ENCODE measurements at regions of chr17 and their contacts with region 1.

Region 1: GRCh38 chr17:68613739-68614298 is 12.7 kb upstream of the FAM20A start:
- DNase-seq: peak; percentile 25
- H3K4me3 ChIP-seq: no peak overlapping the region
- H3K27ac ChIP-seq: no peak overlapping the region
- H3K4me1 ChIP-seq: no peaks in the 10 kb centered on the region
- H3K27me3 ChIP-seq: no peaks in the 10 kb centered on the region
- CTCF ChIP-seq: peak; percentile 73 to 86

Region 2: DNA sequence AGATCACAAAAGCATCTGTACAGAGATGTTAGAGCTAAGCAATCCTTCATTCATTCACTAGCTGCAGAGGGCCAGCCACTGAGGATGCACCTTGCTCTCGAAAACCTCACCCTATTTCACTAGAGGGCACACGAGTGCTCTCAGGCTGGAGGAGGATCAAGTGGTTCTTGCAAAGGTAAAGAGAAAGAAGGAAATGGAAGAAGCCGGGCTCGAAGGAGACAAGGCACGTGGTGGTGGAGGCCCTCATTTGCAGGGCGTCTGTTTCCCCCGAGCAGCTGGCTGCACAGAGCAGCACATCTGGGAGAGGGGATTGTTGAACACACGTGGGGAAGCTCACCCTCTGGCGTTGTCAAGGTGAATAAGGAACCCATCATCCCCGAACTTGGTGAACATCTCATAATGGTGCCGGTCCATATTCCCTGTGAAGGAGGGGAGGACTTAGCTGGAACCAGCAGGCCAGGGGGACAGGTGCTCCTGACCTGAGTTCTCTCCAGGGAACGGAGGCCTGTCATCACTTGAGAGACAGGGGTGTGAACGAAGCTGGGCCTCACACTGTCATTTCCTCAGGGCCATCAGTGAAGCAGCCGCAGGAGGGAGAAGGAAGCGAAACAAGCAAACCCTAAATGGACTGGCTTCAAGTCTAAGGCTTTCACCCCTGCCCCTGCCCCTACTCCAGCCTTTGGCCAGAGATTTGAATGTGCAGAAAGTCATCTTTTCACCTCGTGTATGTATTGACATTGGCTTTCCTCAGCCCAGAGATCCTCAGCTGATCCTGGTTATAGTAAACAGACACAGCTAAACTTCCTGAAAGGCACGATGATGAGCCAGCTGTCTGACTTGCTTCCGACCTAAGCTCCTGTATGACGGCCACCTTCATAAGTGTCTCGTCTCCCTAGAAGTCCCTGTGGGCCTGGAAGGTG is 74.0 kb before region 1 on chr17:
- CTCF ChIA-PET with region 1: no interaction called
- dilution Hi-C with region 1: no loop called
- in situ Hi-C with region 1: loop called (anchors 10 kb)
- intact Hi-C with region 1: loop called (anchors 1 kb)
- DNase-seq: peak; percentile 19
- H3K4me3 ChIP-seq: no peak overlapping the region
- H3K27ac ChIP-seq: no peak overlapping the region
- H3K4me1 ChIP-seq: no peaks in the 10 kb centered on the region
- H3K27me3 ChIP-seq: no peaks in the 10 kb centered on the region
- CTCF ChIP-seq: peak; percentile 9 to 63

Region 3: DNA sequence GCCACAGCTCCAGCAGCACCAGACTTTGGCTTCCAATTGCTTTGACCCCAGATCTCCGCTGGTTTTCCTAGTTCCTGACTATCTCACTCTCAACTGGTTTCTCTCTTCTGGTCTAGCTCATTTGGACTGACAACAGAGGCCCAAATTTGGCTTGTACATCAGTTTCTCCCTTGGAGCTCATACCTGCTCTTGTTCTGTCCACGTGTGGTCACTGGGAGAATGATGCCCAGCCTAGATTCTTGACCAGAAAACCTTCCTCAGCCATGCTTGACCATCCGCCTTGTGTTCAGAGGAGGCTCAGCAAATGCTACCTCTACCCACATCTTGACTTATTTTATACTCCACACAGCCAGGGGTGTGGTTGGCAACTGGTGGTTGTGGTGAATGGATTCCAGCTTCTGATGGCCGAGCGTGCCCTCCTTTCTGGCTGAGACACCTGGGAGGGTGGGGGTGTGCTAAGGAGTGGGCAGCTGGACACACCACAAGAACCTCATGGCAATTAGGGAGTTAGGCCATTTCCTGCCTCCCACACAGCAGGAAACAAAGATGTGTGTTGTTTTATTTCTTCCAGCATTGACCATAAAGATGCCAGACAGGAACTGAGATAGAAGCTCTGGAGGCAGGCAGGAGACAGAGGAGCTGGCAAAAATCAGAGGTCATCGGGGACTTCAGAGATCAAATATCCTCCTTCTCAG is 81.1 kb after region 1 on chr17:
- CTCF ChIA-PET with region 1: no interaction called
- dilution Hi-C with region 1: no loop called
- in situ Hi-C with region 1: no loop called
- intact Hi-C with region 1: no loop called
- DNase-seq: peak; percentile 78
- H3K4me3 ChIP-seq: no peak overlapping the region
- H3K27ac ChIP-seq: no peak overlapping the region
- H3K4me1 ChIP-seq: peaks cover 25% of the 10 kb centered on the region
- H3K27me3 ChIP-seq: no peaks in the 10 kb centered on the region
- CTCF ChIP-seq: no peak

Measured in mammary epithelial cell (primary cell).